ENCODE measurements at regions of chr11 and their contacts with region 1.

Region 1: GRCh38 chr11:76642341-76642740 is 28.2 kb downstream of the LRRC32 start:
- DNase-seq: peak; percentile 74
- ATAC-seq: peak; percentile 96
- H3K4me3 Mint-ChIP-seq: no peak overlapping the region
- H3K27ac Mint-ChIP-seq: peak overlapping the region; percentile 87
- H3K4me1 Mint-ChIP-seq: peaks cover 9% of the 10 kb centered on the region
- H3K27me3 Mint-ChIP-seq: peaks cover 51% of the 10 kb centered on the region

Region 2: DNA sequence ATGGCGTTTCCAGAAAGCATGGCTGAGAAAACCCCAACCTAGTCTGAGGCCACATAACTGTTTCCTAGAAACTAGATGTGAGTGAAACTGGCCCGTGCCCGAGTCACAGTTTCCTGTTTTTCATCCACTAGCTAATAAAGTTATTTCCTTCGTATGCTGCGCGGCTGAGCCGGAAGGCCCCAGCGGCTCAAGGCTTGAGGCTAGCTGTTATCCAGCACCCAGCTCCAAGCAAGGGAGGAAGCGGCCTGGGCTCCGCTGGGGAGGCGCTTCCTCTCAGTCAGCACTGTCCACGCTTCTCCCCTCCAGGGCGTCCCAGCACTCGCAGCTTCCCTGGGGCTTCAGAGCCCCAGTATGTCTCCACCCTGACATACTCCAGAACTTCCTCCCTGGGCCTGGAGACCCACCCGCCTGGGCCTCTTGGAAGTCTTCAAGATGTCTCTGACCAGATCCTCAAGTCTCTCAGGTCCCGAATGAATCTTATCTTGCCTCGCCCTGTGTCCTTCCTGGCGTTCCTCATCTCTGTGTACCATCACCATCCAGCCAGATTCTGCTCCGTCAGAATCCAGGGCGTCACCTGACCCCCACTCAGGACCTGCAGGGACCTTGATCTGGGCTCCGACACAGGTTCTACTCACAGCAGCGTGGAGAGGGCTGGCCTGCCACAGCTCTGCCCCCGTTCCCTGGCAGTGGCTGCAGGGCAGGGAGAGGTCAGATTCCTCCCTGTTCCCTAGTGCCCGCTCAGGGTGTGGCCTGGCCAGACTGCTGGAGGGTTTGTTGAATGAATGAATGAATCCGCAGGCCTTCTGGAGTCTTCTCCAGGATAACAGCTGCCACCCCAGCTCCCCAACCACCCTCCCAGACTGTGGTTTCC is 53.7 kb before region 1 on chr11:
- CTCF ChIA-PET with region 1: no interaction called
- POLR2A ChIA-PET with region 1: no interaction called
- intact Hi-C with region 1: loop called in 1 of 2 experiments (anchors 1 kb)
- DNase-seq: peak; percentile 78
- ATAC-seq: peak; percentile 89
- H3K4me3 Mint-ChIP-seq: no peak overlapping the region
- H3K27ac Mint-ChIP-seq: peak overlapping the region; percentile 75
- H3K4me1 Mint-ChIP-seq: peaks cover 20% of the 10 kb centered on the region
- H3K27me3 Mint-ChIP-seq: peaks cover 2% of the 10 kb centered on the region

Region 3: DNA sequence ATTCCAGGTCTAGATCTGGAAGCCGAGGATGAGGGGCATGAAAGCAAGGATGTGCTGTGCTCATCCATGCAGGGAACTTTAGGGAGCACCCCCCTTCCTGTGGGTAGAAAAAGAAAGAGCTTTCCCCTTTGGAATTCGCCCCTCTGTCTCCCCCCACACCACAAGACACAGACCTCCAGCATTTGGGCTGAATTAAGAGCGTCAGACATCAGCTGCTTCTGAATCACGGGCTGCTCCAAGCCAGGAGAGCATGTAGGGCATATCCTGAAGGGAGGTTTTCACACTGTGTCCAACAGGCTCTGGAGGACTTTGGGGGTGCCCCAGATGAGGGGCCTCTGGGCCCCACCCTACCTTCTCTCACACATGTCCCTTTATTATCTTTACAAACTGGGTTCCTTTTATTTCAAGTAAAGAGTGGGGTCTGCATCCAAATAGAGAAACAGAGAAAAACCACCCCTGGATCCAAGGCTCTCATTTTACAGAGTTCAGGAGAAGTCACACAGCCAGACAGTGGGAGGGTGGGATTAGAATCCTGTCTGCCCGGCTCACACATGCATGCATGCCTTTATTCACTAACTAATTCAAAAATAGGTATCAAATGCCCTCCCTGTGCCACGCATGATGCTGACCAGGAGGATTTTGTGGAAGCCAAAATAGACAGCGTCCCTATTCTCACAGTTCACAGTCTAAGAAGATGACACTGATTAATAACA is 24.6 kb before region 1 on chr11:
- CTCF ChIA-PET with region 1: no interaction called
- POLR2A ChIA-PET with region 1: no interaction called
- intact Hi-C with region 1: no loop called
- DNase-seq: no peak
- ATAC-seq: no peak
- H3K4me3 Mint-ChIP-seq: no peak overlapping the region
- H3K27ac Mint-ChIP-seq: no peak overlapping the region
- H3K4me1 Mint-ChIP-seq: no peaks in the 10 kb centered on the region
- H3K27me3 Mint-ChIP-seq: no peaks in the 10 kb centered on the region